H1 (cell line): ENCODE measurements at regions of chr17 and their contacts with region 1.

Region 1: DNA sequence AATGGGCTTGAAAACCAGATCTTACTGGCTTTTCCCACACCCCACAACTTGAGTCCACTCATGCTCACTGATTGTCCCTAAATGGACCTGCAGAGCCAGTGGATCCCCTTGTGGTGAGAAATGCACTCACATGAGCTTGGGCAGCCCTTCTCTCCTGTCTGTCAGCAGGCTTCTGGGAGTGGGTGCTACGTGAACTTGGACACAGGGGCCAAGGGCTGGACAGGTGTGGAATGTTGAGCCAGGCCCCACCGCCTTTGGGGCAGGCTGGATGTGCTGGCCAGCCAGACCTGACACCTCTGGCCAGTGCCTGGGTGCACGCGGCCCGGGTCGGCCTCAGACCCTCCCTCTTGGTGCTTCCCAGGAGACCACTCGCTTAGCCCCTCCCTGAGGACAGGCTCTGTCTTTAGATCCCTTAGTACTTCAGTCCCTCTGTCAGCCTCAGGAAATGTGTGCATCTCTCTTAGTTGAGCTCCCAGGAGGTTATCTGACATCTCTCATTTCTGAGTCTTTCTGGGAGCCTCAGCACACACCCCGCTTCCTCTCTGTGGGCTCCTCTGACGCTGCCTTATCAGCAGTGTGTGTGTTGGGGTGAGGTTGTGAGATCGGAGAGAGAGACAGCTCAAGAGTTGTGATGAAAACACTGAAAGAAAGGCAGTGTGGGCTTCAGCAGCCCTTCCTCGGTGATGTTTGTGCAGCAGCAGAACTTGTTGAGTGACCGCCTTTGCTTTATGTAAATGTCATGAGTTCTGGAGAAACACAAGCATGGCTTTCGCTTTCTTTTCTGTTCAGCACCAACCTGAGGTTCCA is 117.0 kb downstream of the RAB11FIP4 start:
- DNase-seq: no peak
- H3K4me3 ChIP-seq: no peak overlapping the region
- H3K27ac ChIP-seq: no peak overlapping the region
- H3K4me1 ChIP-seq: peaks cover 0 to 9% (median 5%) of the 10 kb centered on the region in 4 experiments; a peak in 5 of 7 replicates
- H3K27me3 ChIP-seq: no peaks in the 10 kb centered on the region
- CTCF ChIP-seq: peak; percentile 45 to 68 (median 57)
- EP300 ChIP-seq: no peak
- POLR2A ChIP-seq: no peak
- RAD21 ChIP-seq: peak; percentile 38 to 61

Region 2: DNA sequence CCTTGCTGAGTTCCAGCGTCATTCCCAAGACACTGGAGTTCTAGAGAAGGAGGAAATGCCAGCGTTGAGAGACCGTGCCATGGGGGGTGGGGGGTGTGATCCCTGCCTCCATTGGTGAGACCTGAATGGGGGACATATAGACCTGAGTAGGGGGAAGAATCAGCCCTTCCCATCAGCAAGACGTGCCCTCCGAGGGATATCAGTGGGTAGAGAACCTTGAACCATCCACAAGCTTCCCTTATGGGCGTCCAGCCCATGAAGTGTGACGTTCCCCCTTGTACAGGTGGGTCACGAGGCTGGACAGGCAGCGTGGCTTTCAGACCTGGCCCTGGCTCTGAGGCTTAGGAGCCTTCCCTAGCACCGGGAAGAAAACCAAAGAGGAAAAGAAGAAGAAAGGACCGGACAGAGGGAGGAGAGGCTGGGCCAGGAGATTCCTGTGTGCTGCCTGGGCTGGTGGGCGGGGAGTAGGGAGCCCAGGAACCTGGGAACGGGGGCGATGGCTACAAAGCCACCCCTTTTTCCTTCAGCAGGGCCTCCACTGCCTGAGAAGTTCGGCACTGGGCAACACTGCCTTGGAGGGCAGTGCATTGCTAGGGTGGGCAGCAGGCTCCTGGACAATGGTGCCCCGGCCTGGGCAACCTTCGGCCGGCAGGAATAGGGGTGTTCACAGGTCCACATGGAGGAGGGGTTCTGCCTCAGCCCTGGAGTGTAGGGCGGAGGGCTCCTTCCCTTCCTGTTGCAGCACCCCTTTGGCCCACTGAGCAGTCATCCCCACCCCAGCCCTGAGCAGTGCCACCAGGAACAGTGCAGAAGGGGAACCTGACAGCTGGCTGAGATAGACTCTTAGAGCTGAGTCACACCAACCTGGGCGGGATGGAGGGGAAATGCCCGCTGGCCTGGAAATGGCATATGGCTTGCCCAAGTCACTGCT is 109.8 kb before region 1 on chr17:
- CTCF ChIA-PET with region 1: no interaction called
- POLR2A ChIA-PET with region 1: no interaction called
- DNase-seq: peak in 1 of 2 experiments; percentile 38
- H3K4me3 ChIP-seq: no peak overlapping the region
- H3K27ac ChIP-seq: no peak overlapping the region
- H3K4me1 ChIP-seq: no peaks in the 10 kb centered on the region
- H3K27me3 ChIP-seq: no peaks in the 10 kb centered on the region
- CTCF ChIP-seq: no peak
- EP300 ChIP-seq: no peak
- POLR2A ChIP-seq: no peak
- RAD21 ChIP-seq: no peak

Region 3: GRCh38 chr17:31448467-31449077 is 59.9 kb before region 1 on chr17:
- CTCF ChIA-PET with region 1: interaction called, 12 read pairs
- POLR2A ChIA-PET with region 1: interaction called, 3 read pairs
- DNase-seq: no peak
- H3K4me3 ChIP-seq: no peak overlapping the region
- H3K27ac ChIP-seq: no peak overlapping the region
- H3K4me1 ChIP-seq: peaks cover 0 to 9% (median under 1%) of the 10 kb centered on the region in 4 experiments; a peak in 2 of 7 replicates
- H3K27me3 ChIP-seq: no peaks in the 10 kb centered on the region
- CTCF ChIP-seq: no peak
- EP300 ChIP-seq: no peak
- POLR2A ChIP-seq: no peak
- RAD21 ChIP-seq: no peak

Region 4: GRCh38 chr17:31541559-31541958 is 33.1 kb after region 1 on chr17:
- CTCF ChIA-PET with region 1: no interaction called
- POLR2A ChIA-PET with region 1: no interaction called
- DNase-seq: peak in 1 of 2 experiments; percentile 48
- H3K4me3 ChIP-seq: no peak overlapping the region
- H3K27ac ChIP-seq: no peak overlapping the region
- H3K4me1 ChIP-seq: no peaks in the 10 kb centered on the region
- H3K27me3 ChIP-seq: no peaks in the 10 kb centered on the region
- CTCF ChIP-seq: peak in 2 of 3 experiments; percentile 46 to 52; a peak in 2 of 4 replicates
- EP300 ChIP-seq: no peak
- POLR2A ChIP-seq: no peak
- RAD21 ChIP-seq: peak; percentile 31 to 45

Region 5: GRCh38 chr17:31554930-31555329 is 46.4 kb after region 1 on chr17:
- CTCF ChIA-PET with region 1: no interaction called
- POLR2A ChIA-PET with region 1: no interaction called
- DNase-seq: no peak
- H3K4me3 ChIP-seq: no peak overlapping the region
- H3K27ac ChIP-seq: no peak overlapping the region
- H3K4me1 ChIP-seq: peaks cover 0 to 6% (median 3%) of the 10 kb centered on the region in 4 experiments; a peak in 4 of 7 replicates
- H3K27me3 ChIP-seq: peaks cover 3 to 52% (median 26%) of the 10 kb centered on the region in 4 experiments
- CTCF ChIP-seq: no peak
- EP300 ChIP-seq: no peak
- POLR2A ChIP-seq: no peak
- RAD21 ChIP-seq: no peak